GM23248 (cell line): ENCODE measurements at regions of chr17 and their contacts with region 1.

Region 1: GRCh38 chr17:7014261-7014994 is 2.0 kb downstream of the RNASEK start:
- DNase-seq: peak; percentile 100
- H3K4me3 ChIP-seq: peak overlapping the region; percentile 95
- H3K27ac ChIP-seq: peak overlapping the region; percentile 93
- H3K4me1 ChIP-seq: peaks cover 31% of the 10 kb centered on the region
- H3K27me3 ChIP-seq: no peaks in the 10 kb centered on the region

Region 2: DNA sequence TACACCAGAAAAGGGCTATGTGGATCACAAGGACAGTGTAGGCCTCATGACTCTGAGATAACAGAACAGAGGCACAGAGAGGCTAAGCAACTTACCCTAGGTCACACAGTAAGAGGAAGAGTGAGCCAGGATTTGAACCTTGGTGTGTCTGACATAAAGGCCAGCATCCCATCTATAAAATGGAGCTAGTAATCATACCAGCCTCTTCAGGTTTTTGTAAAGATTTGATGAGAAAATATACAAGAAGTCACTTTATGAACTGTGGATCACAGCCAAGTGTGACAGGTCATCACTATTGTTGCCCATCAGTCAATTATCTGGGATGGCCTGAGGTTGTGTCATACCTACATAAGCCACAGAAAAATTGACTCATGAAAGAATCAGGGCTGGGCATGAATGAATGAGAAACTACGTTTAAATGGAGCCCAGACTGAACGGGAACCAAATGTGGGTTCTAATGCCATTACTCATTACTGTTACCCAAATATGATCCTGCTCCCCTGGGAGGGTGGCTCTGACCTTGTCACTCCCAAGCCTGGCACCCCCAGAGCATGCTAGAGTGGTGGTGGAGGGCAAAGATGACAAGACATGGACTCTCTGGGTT is 217.4 kb before region 1 on chr17:
- in situ Hi-C with region 1: no loop called
- DNase-seq: peak; percentile 88
- H3K4me3 ChIP-seq: no peak overlapping the region
- H3K27ac ChIP-seq: no peak overlapping the region
- H3K4me1 ChIP-seq: peaks cover 17% of the 10 kb centered on the region
- H3K27me3 ChIP-seq: no peaks in the 10 kb centered on the region; the same call in 1 of the 2 replicates

Region 3: GRCh38 chr17:6913608-6914443 is 100.6 kb before region 1 on chr17:
- in situ Hi-C with region 1: loop called (anchors 5 kb)
- DNase-seq: peak; percentile 74
- H3K4me3 ChIP-seq: no peak overlapping the region
- H3K27ac ChIP-seq: no peak overlapping the region
- H3K4me1 ChIP-seq: no peaks in the 10 kb centered on the region
- H3K27me3 ChIP-seq: no peaks in the 10 kb centered on the region